ENCODE measurements at regions of chr11 and their contacts with region 1.

Region 1: GRCh38 chr11:83836883-83837654 is 550.9 kb upstream of the CCDC90B start:
- DNase-seq: peak; percentile 22
- ATAC-seq: peak; percentile 47
- H3K4me3 Mint-ChIP-seq: no peak overlapping the region
- H3K27ac Mint-ChIP-seq: no peak overlapping the region
- H3K4me1 Mint-ChIP-seq: no peaks in the 10 kb centered on the region
- H3K27me3 Mint-ChIP-seq: peaks cover 4% of the 10 kb centered on the region

Region 2: DNA sequence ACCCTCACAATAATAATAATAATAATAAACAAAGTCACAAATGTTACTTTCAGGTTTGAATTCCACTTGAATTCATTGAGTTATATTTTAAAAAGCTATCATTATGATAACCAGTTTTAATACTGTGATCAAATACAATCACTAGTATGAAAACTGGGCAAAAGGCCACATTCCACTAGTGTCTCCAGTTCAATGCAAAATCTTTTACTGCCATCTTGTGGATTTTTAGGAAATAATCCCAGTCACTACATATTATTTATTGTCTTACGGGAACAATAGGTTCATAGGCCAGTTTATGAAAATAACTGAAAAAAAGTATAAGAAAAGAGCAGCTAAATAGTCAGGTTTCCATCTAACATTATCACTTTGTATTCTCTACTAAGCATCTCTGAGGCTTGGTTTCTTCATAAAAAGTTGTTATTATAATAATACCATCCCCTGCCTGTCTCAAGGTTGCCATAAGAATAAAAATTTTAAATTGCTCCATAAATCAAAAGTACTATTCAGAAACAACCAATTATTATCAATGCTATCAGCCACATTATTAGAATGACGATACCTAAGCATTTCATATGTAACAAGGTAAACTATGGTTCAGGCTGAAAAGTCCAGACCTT is 17.0 kb before region 1 on chr11:
- CTCF ChIA-PET with region 1: interaction called, 11 read pairs
- POLR2A ChIA-PET with region 1: no interaction called
- DNase-seq: no peak
- ATAC-seq: no peak
- H3K4me3 Mint-ChIP-seq: no peak overlapping the region
- H3K27ac Mint-ChIP-seq: no peak overlapping the region
- H3K4me1 Mint-ChIP-seq: no peaks in the 10 kb centered on the region
- H3K27me3 Mint-ChIP-seq: peaks cover 4% of the 10 kb centered on the region

Region 3: GRCh38 chr11:83865636-83866461 is 28.8 kb after region 1 on chr11:
- CTCF ChIA-PET with region 1: no interaction called
- POLR2A ChIA-PET with region 1: no interaction called
- DNase-seq: no peak
- ATAC-seq: no peak
- H3K4me3 Mint-ChIP-seq: no peak overlapping the region
- H3K27ac Mint-ChIP-seq: no peak overlapping the region
- H3K4me1 Mint-ChIP-seq: no peaks in the 10 kb centered on the region
- H3K27me3 Mint-ChIP-seq: no peaks in the 10 kb centered on the region